IMR-90 (cell line): ENCODE measurements at regions of chr11 and their contacts with region 1.

Region 1: GRCh38 chr11:121661880-121662486 is 209.2 kb upstream of the SORL1-AS1 start:
- DNase-seq: peak; percentile 93
- ATAC-seq: peak; percentile 85
- H3K4me3 ChIP-seq: no peak overlapping the region
- H3K27ac ChIP-seq: peak overlapping the region; percentile 82
- H3K4me1 ChIP-seq: peaks cover 19% of the 10 kb centered on the region
- H3K27me3 ChIP-seq: no peaks in the 10 kb centered on the region
- CTCF ChIP-seq: peak; percentile 33
- POLR2A ChIP-seq: no peak
- RAD21 ChIP-seq: peak; percentile 43; the same call in 1 of the 2 replicates

Region 2: DNA sequence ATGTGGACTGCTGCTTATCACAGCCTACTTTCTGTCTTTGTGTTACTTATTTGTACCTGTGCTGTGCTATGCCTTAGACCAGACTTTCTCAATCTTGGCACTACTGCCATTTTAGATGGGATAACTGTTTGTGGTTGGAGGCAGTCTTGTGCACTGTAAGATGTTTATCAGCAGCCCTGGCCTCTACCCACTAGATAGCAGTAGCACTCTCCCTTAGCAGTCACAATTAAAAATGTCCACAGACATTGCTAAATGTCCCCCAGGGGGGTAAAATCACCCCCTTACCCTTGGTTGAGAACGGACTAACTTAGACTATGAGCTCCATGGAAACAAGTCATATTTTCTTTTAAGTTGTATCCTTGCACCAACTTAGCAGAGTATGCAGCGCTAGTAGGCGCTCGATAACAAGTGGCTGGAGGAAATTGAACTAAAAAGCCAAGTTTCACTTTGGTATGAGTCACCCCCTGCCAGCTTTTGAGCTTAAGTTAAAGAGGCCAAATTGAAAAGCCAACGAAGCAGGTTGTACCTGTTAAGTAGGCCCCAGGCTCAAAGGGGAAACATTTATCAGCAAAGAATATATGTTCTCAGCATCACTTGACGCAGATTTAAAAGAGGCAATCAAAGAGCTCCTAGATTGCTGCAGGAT is 95.6 kb after region 1 on chr11:
- CTCF ChIA-PET with region 1: interaction called, 3 read pairs
- POLR2A ChIA-PET with region 1: no interaction called
- dilution Hi-C with region 1: no loop called
- in situ Hi-C with region 1: no loop called
- intact Hi-C with region 1: loop called (anchors 10 kb)
- DNase-seq: no peak
- ATAC-seq: no peak
- H3K4me3 ChIP-seq: no peak overlapping the region
- H3K27ac ChIP-seq: no peak overlapping the region
- H3K4me1 ChIP-seq: peaks cover 2% of the 10 kb centered on the region; the same call in 1 of the 2 replicates
- H3K27me3 ChIP-seq: peaks cover 4% of the 10 kb centered on the region; the same call in 1 of the 2 replicates
- CTCF ChIP-seq: no peak
- POLR2A ChIP-seq: no peak
- RAD21 ChIP-seq: no peak

Region 3: GRCh38 chr11:122038543-122038942 is 376.6 kb after region 1 on chr11:
- CTCF ChIA-PET with region 1: interaction called, 8 read pairs
- POLR2A ChIA-PET with region 1: no interaction called
- dilution Hi-C with region 1: no loop called
- in situ Hi-C with region 1: loop called (anchors 10 kb)
- intact Hi-C with region 1: no loop called
- DNase-seq: peak; percentile 93
- ATAC-seq: peak; percentile 82
- H3K4me3 ChIP-seq: no peak overlapping the region
- H3K27ac ChIP-seq: peak overlapping the region; percentile 36; the same call in 1 of the 2 replicates
- H3K4me1 ChIP-seq: peaks cover 23% of the 10 kb centered on the region
- H3K27me3 ChIP-seq: no peaks in the 10 kb centered on the region
- CTCF ChIP-seq: no peak
- POLR2A ChIP-seq: no peak
- RAD21 ChIP-seq: no peak